CD8-positive, alpha-beta T cell (primary cell): ENCODE measurements at regions of chr13 and their contacts with region 1.

Region 1: DNA sequence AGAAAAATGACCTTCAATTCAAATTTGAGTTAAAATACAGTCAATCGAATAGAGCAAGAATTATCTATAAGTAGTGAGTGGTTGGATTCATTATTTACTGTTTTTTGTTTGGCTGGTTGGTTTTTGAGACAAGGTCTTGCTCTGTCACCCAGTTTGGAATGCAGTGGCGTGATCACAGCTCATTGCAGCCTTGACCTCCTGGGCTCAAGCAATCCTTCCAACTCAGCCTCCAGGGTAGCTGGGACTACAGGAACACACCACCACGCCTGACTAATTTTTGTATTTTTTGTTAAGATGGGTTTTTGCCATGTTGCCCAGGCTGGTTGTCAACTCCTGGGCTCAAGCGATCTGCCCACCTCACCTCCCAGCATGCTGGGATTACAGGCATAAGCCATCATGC is 25.0 kb downstream of the MTMR6 start:
- DNase-seq: no peak
- ATAC-seq: no peak
- H3K4me3 ChIP-seq: no peak overlapping the region
- H3K4me3 Mint-ChIP-seq: no peak overlapping the region
- H3K27ac ChIP-seq: no peak overlapping the region
- H3K27ac Mint-ChIP-seq: no peak overlapping the region
- H3K4me1 ChIP-seq: no peaks in the 10 kb centered on the region
- H3K4me1 Mint-ChIP-seq: no peaks in the 10 kb centered on the region
- H3K27me3 ChIP-seq: no peaks in the 10 kb centered on the region
- H3K27me3 Mint-ChIP-seq: no peaks in the 10 kb centered on the region
- CTCF ChIP-seq: no peak

Region 2: GRCh38 chr13:24328145-24328544 is 934.1 kb before region 1 on chr13:
- CTCF ChIA-PET with region 1: no interaction called
- POLR2A ChIA-PET with region 1: no interaction called
- intact Hi-C with region 1: no loop called
- DNase-seq: peak in 1 of 9 experiments; percentile 14
- ATAC-seq: peak; percentile 62
- H3K4me3 ChIP-seq: no peak overlapping the region
- H3K4me3 Mint-ChIP-seq: peak overlapping the region; percentile 47
- H3K27ac ChIP-seq: no peak overlapping the region
- H3K27ac Mint-ChIP-seq: no peak overlapping the region
- H3K4me1 ChIP-seq: no peaks in the 10 kb centered on the region
- H3K4me1 Mint-ChIP-seq: no peaks in the 10 kb centered on the region
- H3K27me3 ChIP-seq: no peaks in the 10 kb centered on the region
- H3K27me3 Mint-ChIP-seq: peaks cover 35% of the 10 kb centered on the region
- CTCF ChIP-seq: no peak

Region 3: GRCh38 chr13:25319771-25320170 is 57.5 kb after region 1 on chr13:
- CTCF ChIA-PET with region 1: no interaction called
- POLR2A ChIA-PET with region 1: no interaction called
- intact Hi-C with region 1: loop called (anchors 5 kb)
- DNase-seq: no peak
- ATAC-seq: no peak
- H3K4me3 ChIP-seq: no peak overlapping the region
- H3K4me3 Mint-ChIP-seq: no peak overlapping the region
- H3K27ac ChIP-seq: no peak overlapping the region
- H3K27ac Mint-ChIP-seq: no peak overlapping the region
- H3K4me1 ChIP-seq: no peaks in the 10 kb centered on the region
- H3K4me1 Mint-ChIP-seq: peaks cover 2% of the 10 kb centered on the region
- H3K27me3 ChIP-seq: no peaks in the 10 kb centered on the region
- H3K27me3 Mint-ChIP-seq: no peaks in the 10 kb centered on the region
- CTCF ChIP-seq: no peak

Region 4: DNA sequence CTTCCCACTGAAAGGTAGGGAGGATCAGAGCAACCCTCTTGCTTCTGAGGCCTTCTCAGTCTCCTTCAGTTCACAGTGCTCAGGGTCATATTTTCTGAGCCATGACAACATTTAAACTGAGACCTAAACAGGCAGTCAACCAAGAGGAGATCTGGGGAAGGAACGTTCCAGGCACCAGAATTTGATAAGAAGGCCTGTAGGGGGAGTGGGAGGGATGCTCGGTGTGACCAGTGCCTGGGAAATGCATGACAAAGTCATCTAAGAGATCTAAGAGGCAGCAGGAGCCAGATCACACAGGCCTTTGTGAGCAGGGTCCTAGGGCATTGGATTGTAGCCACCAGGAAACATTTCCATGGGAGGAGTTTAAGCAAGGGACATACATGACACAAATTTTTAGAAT is 718.0 kb after region 1 on chr13:
- CTCF ChIA-PET with region 1: no interaction called
- POLR2A ChIA-PET with region 1: no interaction called
- intact Hi-C with region 1: no loop called
- DNase-seq: peak in 1 of 9 experiments; percentile 35
- ATAC-seq: peak; percentile 40
- H3K4me3 ChIP-seq: no peak overlapping the region
- H3K4me3 Mint-ChIP-seq: no peak overlapping the region
- H3K27ac ChIP-seq: no peak overlapping the region
- H3K27ac Mint-ChIP-seq: no peak overlapping the region
- H3K4me1 ChIP-seq: peaks cover 4% of the 10 kb centered on the region
- H3K4me1 Mint-ChIP-seq: peaks cover 15% of the 10 kb centered on the region
- H3K27me3 ChIP-seq: no peaks in the 10 kb centered on the region
- H3K27me3 Mint-ChIP-seq: no peaks in the 10 kb centered on the region
- CTCF ChIP-seq: no peak